ENCODE measurements at regions of chr1 and their contacts with region 1.

Region 1: GRCh38 chr1:16459352-16459925 is 18.9 kb downstream of the NECAP2 start:
- DNase-seq: no peak
- ATAC-seq: no peak
- H3K4me3 ChIP-seq: no peak overlapping the region
- H3K27ac ChIP-seq: no peak overlapping the region
- H3K4me1 ChIP-seq: no peaks in the 10 kb centered on the region
- H3K27me3 ChIP-seq: no peaks in the 10 kb centered on the region
- CTCF ChIP-seq: no peak
- POLR2A ChIP-seq: no peak
- RAD21 ChIP-seq: no peak

Region 2: DNA sequence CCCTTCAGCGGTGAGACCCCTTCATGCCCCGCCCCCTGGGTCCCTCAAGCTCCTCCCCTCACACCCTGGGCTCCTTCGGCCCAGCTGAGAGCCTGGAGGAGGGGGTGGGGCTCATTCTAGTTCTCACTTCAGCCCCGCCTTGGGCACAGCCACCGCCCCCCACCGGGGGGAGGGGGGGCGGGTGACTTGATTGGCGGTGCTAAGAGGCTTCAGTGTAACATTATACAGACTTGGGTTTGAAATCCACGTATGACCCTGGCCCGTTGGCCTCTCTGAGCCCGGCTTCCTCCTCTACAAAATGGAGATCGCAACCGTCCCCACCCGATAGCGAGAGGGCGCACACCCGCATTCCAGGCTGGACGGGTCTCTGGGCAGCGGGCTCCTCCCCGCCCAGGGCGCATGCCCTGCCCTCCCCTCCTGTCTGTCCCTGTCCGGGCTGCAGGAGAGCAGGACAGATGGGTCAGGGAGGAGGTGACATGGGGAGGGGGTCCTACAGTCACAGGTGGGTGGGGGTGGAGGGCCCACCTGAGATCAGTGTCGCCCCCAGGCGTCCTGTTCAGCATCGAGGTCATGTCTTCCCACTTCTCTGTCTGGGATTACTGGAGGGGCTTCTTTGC is 410.8 kb before region 1 on chr1:
- CTCF ChIA-PET with region 1: no interaction called
- POLR2A ChIA-PET with region 1: no interaction called
- dilution Hi-C with region 1: no loop called
- in situ Hi-C with region 1: no loop called
- intact Hi-C with region 1: no loop called
- DNase-seq: no peak
- ATAC-seq: peak; percentile 79
- H3K4me3 ChIP-seq: peak overlapping the region; percentile 59
- H3K27ac ChIP-seq: no peak overlapping the region
- H3K4me1 ChIP-seq: no peaks in the 10 kb centered on the region
- H3K27me3 ChIP-seq: peaks cover 32% of the 10 kb centered on the region; the same call in 1 of the 2 replicates
- CTCF ChIP-seq: no peak
- POLR2A ChIP-seq: no peak
- RAD21 ChIP-seq: no peak

Region 3: GRCh38 chr1:16440470-16441281 is 18.8 kb before region 1 on chr1 and contains the start of gene NECAP2:
- CTCF ChIA-PET with region 1: interaction called, 3 read pairs
- POLR2A ChIA-PET with region 1: interaction called, 11 read pairs
- dilution Hi-C with region 1: no loop called
- in situ Hi-C with region 1: no loop called
- intact Hi-C with region 1: no loop called
- DNase-seq: peak; percentile 91
- ATAC-seq: peak; percentile 98
- H3K4me3 ChIP-seq: peak within 1 kb of the TSS; percentile 92
- H3K27ac ChIP-seq: peak within 1 kb of the TSS; percentile 84
- H3K4me1 ChIP-seq: peaks cover 2% of the 10 kb centered on the region
- H3K27me3 ChIP-seq: no peaks in the 10 kb centered on the region
- CTCF ChIP-seq: peak; percentile 95
- POLR2A ChIP-seq: peak; percentile 92
- RAD21 ChIP-seq: peak; percentile 46
- total RNA-seq, gene NECAP2: 79.7 and 85.1 TPM in 2 replicates

Region 4: DNA sequence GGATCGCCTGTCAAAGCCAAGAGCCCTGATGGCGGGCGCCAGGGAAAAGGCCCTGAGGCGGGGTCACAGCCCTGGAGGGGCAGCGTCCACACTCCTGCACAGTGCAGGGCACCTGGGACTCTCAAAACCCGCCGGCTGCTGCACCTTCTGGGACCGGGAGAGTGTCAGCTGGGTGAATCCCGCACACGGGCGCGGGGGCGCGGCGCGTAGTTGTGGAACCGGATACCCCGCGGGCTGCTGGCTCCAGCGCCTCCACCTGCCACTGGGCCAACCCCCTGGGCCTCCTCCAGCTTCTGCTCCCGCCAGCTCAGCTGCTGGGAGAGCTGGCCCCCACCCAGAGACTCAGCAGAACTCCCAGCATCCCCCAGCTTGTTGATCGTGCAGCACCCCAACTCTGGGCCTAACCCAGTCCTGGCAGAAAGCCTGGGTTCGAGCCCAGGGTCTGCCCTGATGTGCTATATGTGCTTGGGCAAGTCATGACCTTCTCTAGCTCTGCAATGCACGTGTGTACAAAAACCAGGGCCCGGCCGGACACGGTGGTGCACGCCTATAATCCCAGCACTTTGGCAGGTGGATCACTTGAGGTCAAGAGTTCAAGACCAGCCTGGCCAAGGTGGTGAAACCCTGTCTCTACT is 14.8 kb after region 1 on chr1:
- CTCF ChIA-PET with region 1: no interaction called
- POLR2A ChIA-PET with region 1: no interaction called
- dilution Hi-C with region 1: no loop called
- in situ Hi-C with region 1: no loop called
- intact Hi-C with region 1: loop called (anchors 1 kb)
- DNase-seq: no peak
- ATAC-seq: no peak
- H3K4me3 ChIP-seq: no peak overlapping the region
- H3K27ac ChIP-seq: no peak overlapping the region
- H3K4me1 ChIP-seq: no peaks in the 10 kb centered on the region
- H3K27me3 ChIP-seq: no peaks in the 10 kb centered on the region
- CTCF ChIP-seq: no peak
- POLR2A ChIP-seq: no peak
- RAD21 ChIP-seq: no peak